Heart left ventricle (tissue), 16 donors: ENCODE measurements at regions of chr11 and their contacts with region 1.

Region 1: GRCh38 chr11:16862746-16863145 is 124.3 kb downstream of the C11orf58 start:
- DNase-seq: no peak
- ATAC-seq: no peak
- H3K4me3 ChIP-seq: peak overlapping the region in 2 of 12 donors; percentile 6 to 12
- H3K27ac ChIP-seq: peak overlapping the region in 6 of 12 donors; percentile 17 to 70 (median 46)
- H3K4me1 ChIP-seq: peaks cover 0 to 53% (median 24%) of the 10 kb centered on the region in 12 donors
- H3K27me3 ChIP-seq: no peaks in the 10 kb centered on the region
- CTCF ChIP-seq: no peak
- POLR2A ChIP-seq: no peak

Region 2: DNA sequence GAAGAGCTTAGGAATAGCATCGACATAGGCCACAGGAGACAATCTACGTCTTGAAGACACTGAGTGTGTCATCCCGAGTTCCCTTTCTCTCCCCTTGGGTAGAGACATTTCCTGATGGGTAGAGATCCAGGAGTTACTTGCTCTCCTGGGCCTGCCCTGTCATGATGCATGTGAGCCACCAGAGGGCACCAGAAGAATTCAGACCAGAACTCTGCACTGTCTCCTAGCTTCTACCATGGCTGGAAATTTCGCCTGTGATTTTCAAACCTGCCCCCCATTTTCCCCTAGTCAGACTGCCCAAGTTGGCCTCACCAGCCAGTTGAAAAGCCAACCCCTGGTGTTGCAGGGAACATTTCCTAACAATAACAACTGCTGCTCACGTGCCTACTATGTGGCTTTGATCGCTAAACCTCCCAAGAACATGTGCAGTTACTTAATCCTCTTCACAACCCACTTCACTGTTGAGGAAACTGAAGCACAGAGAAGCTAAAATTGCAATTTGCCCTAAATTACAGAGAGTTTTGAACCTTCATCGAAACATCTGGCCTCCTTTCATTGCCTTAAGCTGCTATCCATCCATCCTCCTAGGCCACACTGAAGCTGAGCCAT is 77.1 kb before region 1 on chr11:
- intact Hi-C with region 1: no loop called
- DNase-seq: peak in 4 of 5 donors; percentile 68 to 75 (median 71)
- ATAC-seq: peak; percentile 33 to 77 (median 72)
- H3K4me3 ChIP-seq: no peak overlapping the region
- H3K27ac ChIP-seq: peak overlapping the region in 5 of 12 donors; percentile 28 to 68 (median 46)
- H3K4me1 ChIP-seq: peaks cover 0 to 71% (median 35%) of the 10 kb centered on the region in 12 donors
- H3K27me3 ChIP-seq: no peaks in the 10 kb centered on the region
- CTCF ChIP-seq: peak; percentile 80 to 97 (median 88)
- POLR2A ChIP-seq: no peak

Region 3: GRCh38 chr11:16924826-16925560 is 62.2 kb after region 1 on chr11:
- intact Hi-C with region 1: loop called in 1 of 10 experiments (anchors 2 kb)
- DNase-seq: peak; percentile 31 to 71 (median 62)
- ATAC-seq: peak; percentile 6 to 69 (median 52)
- H3K4me3 ChIP-seq: peak overlapping the region; percentile 37 to 79 (median 60)
- H3K27ac ChIP-seq: peak overlapping the region in 11 of 12 donors; percentile 32 to 90 (median 75)
- H3K4me1 ChIP-seq: peaks cover 0 to 51% (median 13%) of the 10 kb centered on the region in 12 donors
- H3K27me3 ChIP-seq: peaks cover 0 to 40% (median 0%) of the 10 kb centered on the region in 9 donors
- CTCF ChIP-seq: peak in 1 of 12 donors; percentile 11
- POLR2A ChIP-seq: no peak

Region 4: GRCh38 chr11:17230867-17231851 is 368.4 kb after region 1 on chr11:
- intact Hi-C with region 1: no loop called
- DNase-seq: no peak
- ATAC-seq: no peak
- H3K4me3 ChIP-seq: no peak overlapping the region
- H3K27ac ChIP-seq: no peak overlapping the region
- H3K4me1 ChIP-seq: peaks cover 0 to 7% (median 0%) of the 10 kb centered on the region in 12 donors
- H3K27me3 ChIP-seq: no peaks in the 10 kb centered on the region
- CTCF ChIP-seq: no peak
- POLR2A ChIP-seq: no peak

Region 5: GRCh38 chr11:17371614-17372013 is 508.9 kb after region 1 on chr11:
- intact Hi-C with region 1: no loop called
- DNase-seq: no peak
- ATAC-seq: no peak
- H3K4me3 ChIP-seq: no peak overlapping the region
- H3K27ac ChIP-seq: no peak overlapping the region
- H3K4me1 ChIP-seq: peaks cover 0 to 8% (median 0%) of the 10 kb centered on the region in 12 donors
- H3K27me3 ChIP-seq: no peaks in the 10 kb centered on the region
- CTCF ChIP-seq: no peak
- POLR2A ChIP-seq: no peak

Region 6: DNA sequence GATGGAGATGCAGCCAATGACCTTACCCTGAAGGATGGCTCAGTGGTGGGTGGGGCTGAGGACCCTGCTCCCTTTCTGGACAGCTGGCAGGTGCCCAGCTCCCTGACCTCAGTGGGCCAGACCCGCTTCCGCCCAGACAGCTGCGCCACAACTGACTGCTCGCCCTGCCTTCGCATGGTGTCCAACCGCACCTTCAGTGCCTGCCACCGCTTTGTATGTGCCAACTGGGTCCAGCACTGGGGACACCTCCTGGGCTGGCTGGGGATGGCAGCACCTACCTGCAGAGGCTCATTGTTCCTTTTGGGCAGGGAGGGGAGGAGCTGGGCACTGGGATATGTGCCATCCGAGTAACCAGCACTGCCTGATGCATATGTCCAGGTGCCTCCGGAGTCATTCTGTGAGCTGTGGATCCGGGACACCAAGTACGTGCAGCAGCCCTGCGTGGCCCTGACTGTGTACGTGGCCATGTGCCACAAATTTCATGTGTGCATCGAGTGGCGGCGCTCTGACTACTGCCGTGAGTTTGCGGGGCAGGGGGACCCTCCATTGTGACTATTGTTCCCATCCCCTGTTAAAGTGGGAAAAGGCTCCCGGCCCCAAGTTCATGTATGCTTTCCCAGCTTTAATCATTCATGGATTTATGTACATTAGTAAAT is 769.1 kb after region 1 on chr11:
- intact Hi-C with region 1: no loop called
- DNase-seq: peak in 1 of 5 donors; percentile 52
- ATAC-seq: no peak
- H3K4me3 ChIP-seq: no peak overlapping the region
- H3K27ac ChIP-seq: no peak overlapping the region
- H3K4me1 ChIP-seq: no peaks in the 10 kb centered on the region
- H3K27me3 ChIP-seq: peaks cover 0 to 8% (median 0%) of the 10 kb centered on the region in 9 donors
- CTCF ChIP-seq: no peak
- POLR2A ChIP-seq: no peak